Dendritic cell treated with granulocyte-macrophage colony-stimulating factor and Interleukin-4, amounts not matched to agents 40 ng/mL and 50 ng/mL, for 4 days (primary cell): ENCODE measurements at regions of chr10 and their contacts with region 1.

Region 1: GRCh38 chr10:43461950-43462349 is 25.0 kb downstream of the ZNF487 start:
- H3K4me3 Mint-ChIP-seq: peak overlapping the region; percentile 37
- H3K27ac Mint-ChIP-seq: no peak overlapping the region
- H3K4me1 Mint-ChIP-seq: peaks cover 4% of the 10 kb centered on the region
- H3K27me3 Mint-ChIP-seq: no peaks in the 10 kb centered on the region

Region 2: DNA sequence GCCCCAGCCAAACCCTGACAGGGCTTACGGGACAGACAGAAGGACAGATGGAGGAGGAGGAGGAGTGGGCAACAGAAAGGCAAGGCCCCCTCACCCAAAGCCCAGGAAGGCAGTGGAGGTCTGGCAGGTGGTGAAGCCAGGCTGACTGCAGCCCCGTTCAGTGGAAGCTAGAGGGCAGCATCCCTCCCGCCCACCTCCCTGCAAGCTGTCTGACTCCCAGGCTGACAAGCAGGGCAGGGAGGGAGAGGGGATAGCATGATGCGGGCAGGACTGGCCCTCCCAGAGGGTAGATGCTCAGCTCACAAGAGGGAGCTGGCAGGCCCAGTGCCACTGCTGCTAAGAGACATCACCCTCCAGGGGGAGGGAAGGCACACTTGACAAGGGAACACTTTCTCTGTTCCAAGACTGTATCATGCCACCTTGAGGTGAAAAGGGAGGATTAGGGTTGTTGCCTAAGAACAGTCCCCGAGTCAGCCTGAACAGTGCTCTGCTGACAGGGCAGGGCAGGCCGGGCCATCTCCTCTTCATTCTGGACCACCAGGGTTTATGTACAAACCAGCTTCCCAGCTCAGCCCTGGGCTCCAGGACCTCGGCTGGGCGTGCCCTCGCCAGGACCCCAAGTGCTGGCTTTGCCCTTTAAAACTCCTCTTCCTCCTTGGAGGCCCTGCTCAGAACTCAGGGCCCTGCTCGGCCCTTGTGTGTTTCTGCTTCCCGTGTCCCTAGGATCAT is 256.8 kb before region 1 on chr10:
- intact Hi-C with region 1: loop called (anchors 1 kb)
- H3K4me3 Mint-ChIP-seq: no peak overlapping the region
- H3K27ac Mint-ChIP-seq: no peak overlapping the region
- H3K4me1 Mint-ChIP-seq: peaks cover 27% of the 10 kb centered on the region
- H3K27me3 Mint-ChIP-seq: no peaks in the 10 kb centered on the region

Region 3: GRCh38 chr10:43292755-43293676 is 168.9 kb before region 1 on chr10:
- intact Hi-C with region 1: loop called (anchors 1 kb)
- H3K4me3 Mint-ChIP-seq: peak overlapping the region; percentile 49
- H3K27ac Mint-ChIP-seq: peak overlapping the region; percentile 21
- H3K4me1 Mint-ChIP-seq: peaks cover 6% of the 10 kb centered on the region
- H3K27me3 Mint-ChIP-seq: peaks cover 5% of the 10 kb centered on the region